CD14-positive monocyte (primary cell): ENCODE measurements at regions of chr2 and their contacts with region 1.

Region 1: DNA sequence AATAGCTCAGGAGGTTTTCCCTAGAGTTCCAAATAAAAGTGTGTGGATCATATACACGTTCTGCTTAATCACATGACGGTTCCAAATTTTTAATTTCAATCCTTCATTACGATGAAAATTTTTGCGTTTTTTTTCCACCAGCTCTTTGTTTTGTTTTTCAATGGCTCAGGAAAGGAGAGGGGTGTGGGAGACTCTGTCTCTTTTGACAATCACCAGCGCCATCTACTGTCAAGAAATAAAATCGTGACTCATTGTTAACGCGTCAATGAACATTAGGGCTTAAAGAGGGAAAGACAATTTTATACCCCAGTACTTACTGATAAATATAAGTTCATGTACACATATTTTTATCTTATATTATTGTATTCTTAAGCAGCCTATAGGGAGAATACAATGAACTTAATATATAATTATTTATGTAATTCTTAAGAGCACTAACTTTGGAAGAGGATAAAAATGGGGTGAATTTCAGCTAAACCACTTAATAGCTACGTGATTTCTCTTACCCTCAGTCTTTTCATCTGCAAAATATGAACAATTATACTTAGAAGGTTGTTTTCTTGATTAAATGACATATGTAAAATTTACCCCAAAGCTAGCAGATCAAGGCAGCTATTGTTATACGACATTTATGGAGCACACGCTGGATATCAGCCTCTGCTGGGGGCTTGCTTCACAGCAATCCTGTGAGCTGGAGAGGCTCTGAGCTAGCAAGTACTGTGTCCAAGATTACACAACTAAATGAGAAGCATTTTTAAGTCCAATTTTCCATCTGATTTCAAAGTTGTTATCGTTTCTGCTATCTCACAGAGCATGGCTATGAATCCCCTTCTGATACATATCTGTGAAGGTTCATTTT is 47.4 kb upstream of the RMDN2 start:
- DNase-seq: peak; percentile 55 to 73 (median 66)
- H3K4me3 ChIP-seq: no peak overlapping the region
- H3K4me3 Mint-ChIP-seq: no peak overlapping the region
- H3K27ac ChIP-seq: no peak overlapping the region
- H3K27ac Mint-ChIP-seq: no peak overlapping the region
- H3K4me1 ChIP-seq: no peaks in the 10 kb centered on the region
- H3K4me1 Mint-ChIP-seq: peaks cover 11% of the 10 kb centered on the region
- H3K27me3 ChIP-seq: peaks cover 0 to 9% of the 10 kb centered on the region in 2 donors
- H3K27me3 Mint-ChIP-seq: peaks cover 12 to 14% (median 12%) of the 10 kb centered on the region in 3 donors
- CTCF ChIP-seq: peak; percentile 85

Region 2: DNA sequence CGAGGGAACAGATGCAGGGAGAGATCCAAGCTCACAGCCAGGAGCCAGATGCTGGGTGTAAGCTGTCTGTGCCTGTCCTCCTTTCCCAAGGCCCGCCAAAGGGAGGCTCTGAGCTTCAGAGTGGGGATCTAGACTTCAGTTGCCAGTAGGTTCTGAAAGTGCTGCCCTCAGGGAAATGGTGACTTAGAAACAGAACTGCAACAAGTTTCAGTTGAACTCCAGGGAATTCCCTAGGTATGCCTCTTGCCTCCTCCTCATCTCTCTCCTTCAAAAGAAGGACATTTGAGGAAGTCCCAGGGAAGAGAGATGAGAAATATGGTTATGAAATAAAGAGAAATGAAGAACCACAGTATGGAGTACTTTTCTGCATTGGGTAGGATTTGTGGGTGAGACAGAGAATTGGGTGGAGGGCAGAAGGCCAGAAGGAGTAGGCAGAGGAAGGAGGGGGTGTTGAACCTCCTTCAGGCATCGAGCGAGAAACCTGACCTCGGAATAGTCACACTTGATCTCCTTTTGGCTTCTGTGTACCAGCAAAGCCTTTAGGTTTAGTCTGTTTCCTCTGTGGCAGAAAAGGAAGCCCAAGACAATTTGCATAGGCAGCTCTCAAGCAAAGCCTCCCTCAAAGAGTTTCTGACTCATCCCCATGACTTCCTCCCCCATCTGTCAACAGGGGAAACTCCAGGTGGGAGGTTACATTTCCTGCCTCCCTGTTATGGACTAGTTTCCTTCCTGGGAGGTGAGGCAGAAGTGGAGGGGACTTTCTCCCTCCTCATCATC is 487.5 kb before region 1 on chr2:
- intact Hi-C with region 1: loop called in 1 of 2 experiments (anchors 5 kb)
- DNase-seq: peak; percentile 86 to 99 (median 90)
- H3K4me3 ChIP-seq: peak overlapping the region in 1 of 3 experiments; percentile 49
- H3K4me3 Mint-ChIP-seq: peak overlapping the region; percentile 48 to 80
- H3K27ac ChIP-seq: peak overlapping the region; percentile 77 to 83
- H3K27ac Mint-ChIP-seq: peak overlapping the region in 5 of 7 donors; percentile 94 to 99 (median 98)
- H3K4me1 ChIP-seq: peaks cover 55 to 58% of the 10 kb centered on the region in 2 donors
- H3K4me1 Mint-ChIP-seq: peaks cover 21% of the 10 kb centered on the region
- H3K27me3 ChIP-seq: no peaks in the 10 kb centered on the region
- H3K27me3 Mint-ChIP-seq: peaks cover 0 to 2% (median 2%) of the 10 kb centered on the region in 3 donors
- CTCF ChIP-seq: no peak

Region 3: DNA sequence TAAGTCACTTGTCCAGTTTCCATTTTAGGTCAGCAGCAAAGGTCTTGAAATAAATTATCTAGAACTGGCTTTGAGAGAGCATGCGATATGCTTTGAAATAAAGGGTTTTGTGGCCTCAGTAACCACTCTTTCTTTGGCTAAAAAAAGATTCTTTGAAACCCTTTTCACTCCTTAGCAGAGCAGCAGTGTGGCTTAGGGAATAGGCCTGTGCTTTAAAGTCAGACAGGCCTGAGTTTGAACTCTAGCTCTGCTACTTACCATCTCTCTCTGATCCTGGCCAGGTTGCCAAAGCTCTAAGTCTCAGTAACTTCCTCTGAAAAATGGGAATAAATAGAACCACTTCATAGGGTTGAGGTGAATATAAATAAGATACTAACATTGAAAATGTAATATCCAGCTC is 480.5 kb before region 1 on chr2:
- intact Hi-C with region 1: loop called (anchors 2 to 5 kb)
- DNase-seq: no peak
- H3K4me3 ChIP-seq: no peak overlapping the region
- H3K4me3 Mint-ChIP-seq: no peak overlapping the region
- H3K27ac ChIP-seq: no peak overlapping the region
- H3K27ac Mint-ChIP-seq: no peak overlapping the region
- H3K4me1 ChIP-seq: peaks cover 20 to 25% of the 10 kb centered on the region in 2 donors
- H3K4me1 Mint-ChIP-seq: peaks cover 27% of the 10 kb centered on the region
- H3K27me3 ChIP-seq: no peaks in the 10 kb centered on the region
- H3K27me3 Mint-ChIP-seq: peaks cover 0 to 3% (median 0%) of the 10 kb centered on the region in 3 donors
- CTCF ChIP-seq: no peak

Region 4: DNA sequence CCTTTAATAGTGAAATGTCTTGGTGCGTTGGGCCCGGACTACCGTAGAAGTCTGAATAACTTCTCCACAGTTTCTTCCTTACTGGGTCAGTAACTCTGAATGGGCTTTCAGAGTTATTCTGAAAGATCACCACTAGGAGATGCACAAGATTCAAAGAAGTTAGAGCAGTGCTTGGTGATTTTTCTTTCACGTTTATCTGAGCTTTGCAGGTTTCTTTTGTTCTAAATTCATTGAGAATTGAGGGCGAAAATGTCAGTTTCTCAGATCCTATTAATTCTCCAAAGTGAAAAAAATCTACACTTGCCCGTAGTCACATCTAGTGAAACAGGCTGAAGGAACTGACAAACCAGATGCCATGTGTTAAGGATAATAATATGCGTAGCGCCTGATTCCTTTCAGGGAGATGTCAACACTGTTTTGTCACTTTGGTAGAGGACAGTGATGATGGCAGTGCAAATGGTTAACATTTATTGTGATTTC is 463.2 kb before region 1 on chr2:
- intact Hi-C with region 1: loop called in 1 of 2 experiments (anchors 5 kb)
- DNase-seq: peak; percentile 49 to 73 (median 59)
- H3K4me3 ChIP-seq: peak overlapping the region in 2 of 3 experiments; percentile 23 to 40
- H3K4me3 Mint-ChIP-seq: peak overlapping the region; percentile 20 to 71
- H3K27ac ChIP-seq: no peak overlapping the region
- H3K27ac Mint-ChIP-seq: peak overlapping the region in 1 of 7 donors; percentile 21
- H3K4me1 ChIP-seq: peaks cover 8 to 10% of the 10 kb centered on the region in 2 donors
- H3K4me1 Mint-ChIP-seq: peaks cover 14% of the 10 kb centered on the region
- H3K27me3 ChIP-seq: no peaks in the 10 kb centered on the region
- H3K27me3 Mint-ChIP-seq: peaks cover 0 to 4% (median 0%) of the 10 kb centered on the region in 3 donors
- CTCF ChIP-seq: peak; percentile 88

Region 5: DNA sequence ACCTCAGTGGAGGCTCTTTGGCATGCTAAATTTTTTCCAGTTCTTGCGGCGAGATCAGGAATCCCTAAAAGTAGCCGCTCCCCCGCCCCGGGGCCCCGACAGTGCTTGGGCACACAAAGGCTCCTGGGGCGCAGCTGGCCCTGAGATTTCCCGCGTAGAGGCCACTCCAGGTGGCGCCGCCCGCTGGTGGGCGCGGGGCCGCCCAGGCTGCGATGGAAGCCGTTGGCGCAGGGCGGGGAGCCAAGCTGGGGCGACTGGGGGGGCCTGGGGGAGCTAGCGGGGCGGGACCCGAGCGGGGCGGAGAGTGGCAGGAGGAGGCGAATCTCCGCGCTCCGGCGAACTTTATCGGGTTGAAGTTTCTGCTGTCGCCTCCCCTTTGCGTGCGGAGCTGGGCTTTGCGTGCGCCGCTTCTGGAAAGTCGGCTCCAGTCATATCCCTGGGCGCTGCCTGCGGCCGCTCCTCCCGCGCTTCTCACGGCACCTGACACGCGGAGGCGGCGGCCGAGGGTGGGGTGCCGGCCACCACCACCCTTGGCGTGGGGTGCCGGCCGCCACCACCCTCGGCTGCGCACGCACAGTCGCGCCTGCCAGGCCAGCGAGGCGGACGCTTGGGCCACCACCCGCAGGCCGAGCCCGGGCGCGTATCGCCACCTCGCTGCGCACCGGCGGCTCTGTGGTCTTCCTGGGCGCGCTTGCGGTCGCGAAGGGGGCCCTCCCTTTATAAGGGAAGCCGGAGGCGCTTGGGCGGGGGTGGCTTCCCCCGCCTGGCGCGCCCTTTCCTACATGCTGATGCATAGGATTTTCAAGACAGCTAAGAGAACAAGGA is 199.1 kb after region 1 on chr2:
- intact Hi-C with region 1: no loop called
- DNase-seq: peak; percentile 92 to 97 (median 94)
- H3K4me3 ChIP-seq: peak overlapping the region; percentile 60 to 93 (median 84)
- H3K4me3 Mint-ChIP-seq: peak overlapping the region; percentile 94 to 98
- H3K27ac ChIP-seq: peak overlapping the region; percentile 94 to 96
- H3K27ac Mint-ChIP-seq: peak overlapping the region; percentile 80 to 94 (median 90)
- H3K4me1 ChIP-seq: peaks cover 48 to 81% of the 10 kb centered on the region in 2 donors
- H3K4me1 Mint-ChIP-seq: peaks cover 66% of the 10 kb centered on the region
- H3K27me3 ChIP-seq: peaks cover 0 to 19% of the 10 kb centered on the region in 2 donors
- H3K27me3 Mint-ChIP-seq: peaks cover 36 to 48% (median 46%) of the 10 kb centered on the region in 3 donors
- CTCF ChIP-seq: peak; percentile 46